T-cell (primary cell): ENCODE measurements at regions of chr4 and their contacts with region 1.

Region 1: DNA sequence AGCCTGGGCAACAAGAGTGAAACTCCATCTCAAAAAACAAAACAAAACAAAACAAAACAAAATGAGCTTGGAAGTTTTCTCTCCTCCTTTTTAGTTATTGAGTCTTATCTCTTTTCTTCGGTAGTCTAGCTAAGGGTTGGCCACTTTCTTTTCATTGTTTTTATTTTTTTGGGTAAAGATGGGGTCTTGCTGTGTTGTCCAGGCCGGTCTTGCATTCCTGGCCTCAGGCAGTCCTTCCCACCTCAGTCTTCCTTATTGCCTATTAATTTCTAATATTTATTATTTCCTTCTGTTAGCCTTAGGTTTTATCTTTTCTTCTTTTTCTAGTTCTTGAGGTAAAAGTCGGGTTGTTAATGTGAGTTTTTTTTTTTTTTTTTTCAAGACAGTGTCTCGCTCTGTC is 16.4 kb downstream of the METAP1 start:
- DNase-seq: no peak
- ATAC-seq: no peak
- H3K4me3 ChIP-seq: no peak overlapping the region
- H3K4me3 Mint-ChIP-seq: no peak overlapping the region
- H3K27ac ChIP-seq: no peak overlapping the region
- H3K27ac Mint-ChIP-seq: no peak overlapping the region
- H3K4me1 ChIP-seq: no peaks in the 10 kb centered on the region
- H3K4me1 Mint-ChIP-seq: peaks cover 45 to 55% (median 50%) of the 10 kb centered on the region in 3 donors
- H3K27me3 ChIP-seq: no peaks in the 10 kb centered on the region
- H3K27me3 Mint-ChIP-seq: no peaks in the 10 kb centered on the region

Region 2: DNA sequence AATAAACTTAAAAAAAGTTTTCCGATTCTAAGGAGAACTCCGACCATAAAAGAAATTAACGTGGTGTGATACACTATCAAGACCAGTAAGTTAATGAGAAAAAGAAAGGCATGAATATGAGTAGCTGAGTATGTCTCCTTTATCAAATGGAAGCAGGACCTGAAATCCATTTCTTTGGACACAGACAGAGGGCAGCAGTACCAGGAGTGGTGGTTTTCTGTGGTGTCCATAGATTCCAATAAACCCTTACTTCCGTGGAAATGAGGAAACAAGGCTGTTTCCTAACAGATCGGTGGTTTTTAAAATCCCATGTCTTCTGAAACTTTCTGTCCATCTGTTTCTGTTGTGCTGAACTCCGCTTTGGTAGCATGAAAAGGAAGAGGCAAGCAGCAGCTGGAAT is 225.0 kb before region 1 on chr4:
- CTCF ChIA-PET with region 1: no interaction called
- POLR2A ChIA-PET with region 1: no interaction called
- DNase-seq: no peak
- ATAC-seq: no peak
- H3K4me3 ChIP-seq: no peak overlapping the region
- H3K4me3 Mint-ChIP-seq: no peak overlapping the region
- H3K27ac ChIP-seq: no peak overlapping the region
- H3K27ac Mint-ChIP-seq: no peak overlapping the region
- H3K4me1 ChIP-seq: no peaks in the 10 kb centered on the region
- H3K4me1 Mint-ChIP-seq: no peaks in the 10 kb centered on the region
- H3K27me3 ChIP-seq: no peaks in the 10 kb centered on the region
- H3K27me3 Mint-ChIP-seq: no peaks in the 10 kb centered on the region

Region 3: DNA sequence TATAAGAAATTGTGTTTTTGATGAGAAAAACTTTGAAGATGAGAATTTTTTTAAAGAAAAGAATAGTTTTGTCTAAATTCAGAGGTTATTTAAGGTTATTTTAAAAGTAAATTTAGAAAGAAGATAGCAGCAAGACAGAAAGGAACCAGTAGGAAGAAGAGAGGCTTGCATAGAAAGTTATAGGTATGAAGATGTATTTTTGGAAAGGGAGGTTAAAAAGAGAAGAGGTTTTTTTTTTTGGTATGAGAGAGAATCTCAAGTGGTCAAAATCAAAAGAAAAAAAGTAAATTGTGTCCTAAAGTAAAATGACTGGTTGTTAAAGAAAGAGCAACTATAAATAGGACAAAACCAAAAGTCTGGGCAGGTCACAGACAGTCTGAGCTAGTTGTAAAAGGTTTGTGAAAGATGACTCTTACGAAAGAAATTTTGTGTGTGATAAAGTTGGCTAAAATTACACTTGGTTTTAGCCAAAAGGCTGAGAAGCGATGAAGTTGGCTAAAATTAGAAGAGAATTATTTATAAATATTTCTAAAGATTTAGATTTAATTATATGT is 66.5 kb before region 1 on chr4:
- CTCF ChIA-PET with region 1: no interaction called
- POLR2A ChIA-PET with region 1: interaction called in 1 of 2 experiments, 14 read pairs
- DNase-seq: no peak
- ATAC-seq: no peak
- H3K4me3 ChIP-seq: no peak overlapping the region
- H3K4me3 Mint-ChIP-seq: no peak overlapping the region
- H3K27ac ChIP-seq: no peak overlapping the region
- H3K27ac Mint-ChIP-seq: no peak overlapping the region
- H3K4me1 ChIP-seq: no peaks in the 10 kb centered on the region
- H3K4me1 Mint-ChIP-seq: no peaks in the 10 kb centered on the region
- H3K27me3 ChIP-seq: peaks cover 0 to 3% of the 10 kb centered on the region in 2 experiments
- H3K27me3 Mint-ChIP-seq: no peaks in the 10 kb centered on the region

Region 4: DNA sequence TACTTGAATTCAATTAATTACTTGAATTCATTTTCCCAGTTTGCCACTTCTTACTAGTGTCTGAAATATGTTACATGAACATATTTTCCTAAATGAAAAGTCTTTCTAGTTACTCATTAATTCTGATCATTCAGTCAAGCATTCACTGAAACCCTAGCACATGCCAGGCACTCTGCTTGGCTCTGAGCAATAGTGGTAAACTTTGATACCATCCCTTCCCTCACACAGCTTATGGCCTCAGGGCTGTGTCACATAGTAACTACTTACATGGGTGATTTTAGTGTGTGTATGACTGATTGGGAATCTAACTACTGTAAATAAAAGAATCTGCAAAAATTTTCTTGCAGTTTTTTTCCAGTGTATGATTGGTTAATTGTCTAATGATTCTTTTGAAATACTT is 16.3 kb after region 1 on chr4:
- CTCF ChIA-PET with region 1: interaction called in 1 of 2 experiments, 6 read pairs
- POLR2A ChIA-PET with region 1: interaction called, 13 read pairs
- DNase-seq: no peak
- ATAC-seq: no peak
- H3K4me3 ChIP-seq: no peak overlapping the region
- H3K4me3 Mint-ChIP-seq: no peak overlapping the region
- H3K27ac ChIP-seq: no peak overlapping the region
- H3K27ac Mint-ChIP-seq: no peak overlapping the region
- H3K4me1 ChIP-seq: peaks cover 0 to 4% of the 10 kb centered on the region in 2 experiments
- H3K4me1 Mint-ChIP-seq: peaks cover 73 to 88% (median 79%) of the 10 kb centered on the region in 3 donors
- H3K27me3 ChIP-seq: no peaks in the 10 kb centered on the region
- H3K27me3 Mint-ChIP-seq: no peaks in the 10 kb centered on the region

Region 5: DNA sequence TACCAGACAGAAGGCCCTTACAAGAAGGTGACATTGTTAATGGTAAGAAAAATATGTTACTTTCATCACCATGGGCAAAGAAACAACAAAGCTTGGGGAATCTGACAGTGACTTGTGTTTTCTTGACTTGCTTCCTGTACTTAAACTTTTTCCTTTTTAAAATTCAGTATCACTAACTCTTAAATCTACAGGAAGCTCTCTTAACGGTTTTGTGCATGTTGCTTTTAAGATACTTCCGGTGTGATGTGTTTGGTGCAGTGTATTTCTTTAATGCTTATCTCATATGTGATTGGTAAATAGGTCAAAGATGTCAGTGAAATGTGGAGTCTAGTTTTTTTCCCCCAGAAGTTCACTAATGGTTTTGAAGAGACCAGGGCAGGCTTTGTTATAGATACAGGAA is 31.4 kb after region 1 on chr4:
- CTCF ChIA-PET with region 1: interaction called in 1 of 2 experiments, 10 read pairs
- POLR2A ChIA-PET with region 1: no interaction called
- DNase-seq: peak in 5 of 35 experiments; percentile 6 to 66 (median 12)
- ATAC-seq: peak; percentile 83 to 98 (median 94)
- H3K4me3 ChIP-seq: no peak overlapping the region
- H3K4me3 Mint-ChIP-seq: peak overlapping the region in 2 of 3 donors; percentile 37 to 41
- H3K27ac ChIP-seq: peak overlapping the region; percentile 82
- H3K27ac Mint-ChIP-seq: peak overlapping the region; percentile 86 to 89
- H3K4me1 ChIP-seq: peaks cover 6 to 13% of the 10 kb centered on the region in 2 experiments
- H3K4me1 Mint-ChIP-seq: peaks cover 20 to 25% (median 20%) of the 10 kb centered on the region in 3 donors
- H3K27me3 ChIP-seq: no peaks in the 10 kb centered on the region
- H3K27me3 Mint-ChIP-seq: no peaks in the 10 kb centered on the region